HEK293 (cell line): ENCODE measurements at regions of chr14 and their contacts with region 1.

Region 1: DNA sequence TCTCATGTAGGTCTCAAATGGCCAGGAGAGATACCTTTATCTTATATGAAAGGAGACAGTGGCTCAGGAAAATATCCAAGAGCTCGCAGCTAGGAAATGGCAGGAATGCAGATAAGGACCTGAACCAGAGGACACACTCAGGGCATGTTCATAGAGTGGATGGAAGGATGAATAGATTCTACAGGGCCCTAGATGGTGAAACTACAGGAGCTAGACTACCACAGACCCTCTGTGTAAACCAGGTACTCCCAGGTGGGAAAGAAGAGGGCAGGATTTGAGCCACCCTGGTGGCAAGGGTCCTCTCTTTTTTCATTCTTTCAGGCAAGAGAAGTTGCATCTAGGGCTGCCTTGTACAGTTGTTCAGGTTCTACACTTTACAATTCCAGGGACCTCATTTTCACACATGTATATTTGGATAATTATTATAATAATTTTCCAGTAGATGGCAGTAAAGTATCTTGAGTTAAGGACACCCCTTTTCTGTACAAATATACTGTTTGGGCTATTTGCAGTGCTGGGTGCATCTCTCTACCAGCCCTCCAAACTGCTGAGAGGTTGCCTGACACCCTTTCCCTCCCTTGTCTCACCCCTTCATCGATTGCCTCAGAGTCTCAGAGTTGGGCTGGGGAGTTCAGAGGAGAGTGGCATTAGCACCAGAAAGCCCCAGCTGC is 10.5 kb upstream of the ZDHHC22 start:
- H3K4me3 ChIP-seq: no peak overlapping the region
- H3K27ac ChIP-seq: no peak overlapping the region
- H3K4me1 ChIP-seq: no peaks in the 10 kb centered on the region
- CTCF ChIP-seq: no peak

Region 2: GRCh38 chr14:77040059-77040740 is 111.9 kb before region 1 on chr14:
- CTCF ChIA-PET with region 1: no interaction called
- POLR2A ChIA-PET with region 1: no interaction called
- H3K4me3 ChIP-seq: peak overlapping the region; percentile 29
- H3K27ac ChIP-seq: peak overlapping the region; percentile 97
- H3K4me1 ChIP-seq: peaks cover 69% of the 10 kb centered on the region
- CTCF ChIP-seq: no peak

Region 3: GRCh38 chr14:77139540-77140358 is 12.3 kb before region 1 on chr14:
- CTCF ChIA-PET with region 1: interaction called, 82 read pairs
- POLR2A ChIA-PET with region 1: no interaction called
- H3K4me3 ChIP-seq: peak overlapping the region; percentile 47
- H3K27ac ChIP-seq: no peak overlapping the region
- H3K4me1 ChIP-seq: no peaks in the 10 kb centered on the region; the same call in 1 of the 2 replicates
- CTCF ChIP-seq: peak; percentile 75

Region 4: GRCh38 chr14:77181603-77182437 is 29.8 kb after region 1 on chr14 and contains the start of gene TMEM63C:
- CTCF ChIA-PET with region 1: interaction called, 13 read pairs
- POLR2A ChIA-PET with region 1: no interaction called
- H3K4me3 ChIP-seq: peak within 1 kb of the TSS; percentile 60
- H3K27ac ChIP-seq: peak within 1 kb of the TSS; percentile 38; the same call in 1 of the 2 replicates
- H3K4me1 ChIP-seq: 0 out of 2 replicates have a peak, but pooled peaks cover 3% of the 10 kb centered on the region
- CTCF ChIP-seq: peak; percentile 34

Region 5: DNA sequence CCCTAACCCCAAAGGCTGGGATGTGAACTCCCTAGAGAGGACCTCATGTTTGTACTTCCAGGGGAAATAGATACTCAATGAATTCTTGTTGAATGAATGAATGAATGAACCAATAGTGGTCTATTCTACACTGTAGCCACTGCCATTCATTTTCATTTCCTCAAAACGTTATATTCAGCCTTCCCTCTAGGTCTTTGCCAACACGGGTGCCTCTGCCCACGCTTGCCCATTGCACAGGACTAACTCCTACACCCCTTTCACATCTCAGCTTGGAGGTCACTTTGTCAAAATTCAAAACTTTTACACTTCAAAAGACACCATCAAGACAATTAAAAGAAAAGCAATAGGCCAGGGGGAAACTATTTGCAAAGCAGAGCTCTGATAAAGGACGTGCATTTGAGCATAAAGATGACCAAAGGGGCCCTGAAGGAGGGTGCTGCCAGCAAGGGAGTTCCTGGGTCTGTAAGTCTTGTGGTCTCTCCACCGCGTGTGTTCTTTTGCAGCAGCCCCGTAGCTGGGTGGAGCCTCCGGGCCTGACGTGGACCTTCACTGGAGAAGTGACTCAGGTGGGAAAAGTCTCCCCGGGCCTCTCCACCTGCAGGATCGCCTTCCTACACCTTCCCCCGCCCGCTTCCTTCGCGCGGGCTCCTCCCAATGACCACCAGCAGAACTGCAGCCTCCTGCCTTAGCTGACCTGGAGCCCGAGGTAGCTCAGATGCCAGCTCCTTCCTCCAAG is 61.1 kb after region 1 on chr14:
- CTCF ChIA-PET with region 1: interaction called, 24 read pairs
- POLR2A ChIA-PET with region 1: no interaction called
- H3K4me3 ChIP-seq: no peak overlapping the region
- H3K27ac ChIP-seq: no peak overlapping the region
- H3K4me1 ChIP-seq: no peaks in the 10 kb centered on the region
- CTCF ChIP-seq: peak; percentile 55; the same call in 1 of the 2 replicates

Region 6: GRCh38 chr14:77301103-77301502 is 149.1 kb after region 1 on chr14:
- CTCF ChIA-PET with region 1: interaction called, 18 read pairs
- POLR2A ChIA-PET with region 1: no interaction called
- H3K4me3 ChIP-seq: no peak overlapping the region
- H3K27ac ChIP-seq: no peak overlapping the region
- H3K4me1 ChIP-seq: peaks cover 22% of the 10 kb centered on the region
- CTCF ChIP-seq: peak; percentile 78